B cell (primary cell): ENCODE measurements at regions of chr2 and their contacts with region 1.

Region 1: DNA sequence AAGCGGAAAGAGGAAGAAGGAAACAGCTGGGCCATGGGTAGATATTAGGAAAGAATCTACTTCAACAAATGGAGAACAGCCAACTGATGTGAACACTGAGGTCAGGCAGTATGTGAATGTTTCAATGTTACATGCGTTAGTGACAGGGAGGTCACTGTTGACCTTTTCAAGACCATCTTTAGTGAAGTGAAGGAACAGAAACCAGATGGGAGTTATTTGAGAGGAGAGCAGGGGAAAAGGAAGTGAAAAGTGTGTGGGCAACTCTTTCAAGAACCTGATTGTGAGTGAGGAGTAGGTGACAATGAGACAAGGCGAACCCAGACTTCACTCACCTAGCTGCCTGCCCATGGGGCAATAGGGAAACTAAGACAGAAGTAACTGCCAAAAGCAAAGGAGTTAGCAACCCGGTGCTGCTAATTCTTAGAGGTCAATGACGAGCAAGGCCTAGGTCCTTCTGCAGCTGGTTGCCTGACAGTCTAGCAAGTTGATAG is 67.0 kb downstream of the SP3 start:
- DNase-seq: peak; percentile 56
- ATAC-seq: peak; percentile 88
- H3K4me3 ChIP-seq: no peak overlapping the region
- H3K4me3 Mint-ChIP-seq: peak overlapping the region; percentile 35
- H3K27ac ChIP-seq: peak overlapping the region in 1 of 2 donors; percentile 39
- H3K27ac Mint-ChIP-seq: peak overlapping the region; percentile 54
- H3K4me1 ChIP-seq: peaks cover 15 to 23% of the 10 kb centered on the region in 2 donors
- H3K4me1 Mint-ChIP-seq: peaks cover 32% of the 10 kb centered on the region
- H3K27me3 ChIP-seq: no peaks in the 10 kb centered on the region
- H3K27me3 Mint-ChIP-seq: no peaks in the 10 kb centered on the region
- CTCF ChIP-seq: no peak

Region 2: GRCh38 chr2:173843526-173843925 is 54.7 kb before region 1 on chr2:
- CTCF ChIA-PET with region 1: no interaction called
- POLR2A ChIA-PET with region 1: no interaction called
- intact Hi-C with region 1: no loop called
- DNase-seq: no peak
- ATAC-seq: no peak
- H3K4me3 ChIP-seq: no peak overlapping the region
- H3K4me3 Mint-ChIP-seq: no peak overlapping the region
- H3K27ac ChIP-seq: no peak overlapping the region
- H3K27ac Mint-ChIP-seq: no peak overlapping the region
- H3K4me1 ChIP-seq: no peaks in the 10 kb centered on the region
- H3K4me1 Mint-ChIP-seq: no peaks in the 10 kb centered on the region
- H3K27me3 ChIP-seq: no peaks in the 10 kb centered on the region
- H3K27me3 Mint-ChIP-seq: peaks cover 30% of the 10 kb centered on the region
- CTCF ChIP-seq: no peak

Region 3: GRCh38 chr2:173854840-173855239 is 43.4 kb before region 1 on chr2:
- CTCF ChIA-PET with region 1: no interaction called
- POLR2A ChIA-PET with region 1: no interaction called
- intact Hi-C with region 1: no loop called
- DNase-seq: no peak
- ATAC-seq: no peak
- H3K4me3 ChIP-seq: no peak overlapping the region
- H3K4me3 Mint-ChIP-seq: no peak overlapping the region
- H3K27ac ChIP-seq: no peak overlapping the region
- H3K27ac Mint-ChIP-seq: no peak overlapping the region
- H3K4me1 ChIP-seq: peaks cover 0 to 5% of the 10 kb centered on the region in 2 donors
- H3K4me1 Mint-ChIP-seq: peaks cover 7% of the 10 kb centered on the region
- H3K27me3 ChIP-seq: no peaks in the 10 kb centered on the region
- H3K27me3 Mint-ChIP-seq: peaks cover 5% of the 10 kb centered on the region
- CTCF ChIP-seq: no peak

Region 4: GRCh38 chr2:173874894-173875237 is 23.4 kb before region 1 on chr2:
- CTCF ChIA-PET with region 1: no interaction called
- POLR2A ChIA-PET with region 1: no interaction called
- intact Hi-C with region 1: loop called (anchors 2 kb)
- DNase-seq: peak; percentile 85
- ATAC-seq: peak; percentile 99
- H3K4me3 ChIP-seq: peak overlapping the region in 1 of 5 experiments; percentile 3
- H3K4me3 Mint-ChIP-seq: peak overlapping the region; percentile 89
- H3K27ac ChIP-seq: no peak overlapping the region
- H3K27ac Mint-ChIP-seq: peak overlapping the region; percentile 50
- H3K4me1 ChIP-seq: peaks cover 29 to 32% of the 10 kb centered on the region in 2 donors
- H3K4me1 Mint-ChIP-seq: peaks cover 31% of the 10 kb centered on the region
- H3K27me3 ChIP-seq: peaks cover 0 to 5% (median 1%) of the 10 kb centered on the region in 4 experiments
- H3K27me3 Mint-ChIP-seq: peaks cover 23% of the 10 kb centered on the region
- CTCF ChIP-seq: no peak

Region 5: DNA sequence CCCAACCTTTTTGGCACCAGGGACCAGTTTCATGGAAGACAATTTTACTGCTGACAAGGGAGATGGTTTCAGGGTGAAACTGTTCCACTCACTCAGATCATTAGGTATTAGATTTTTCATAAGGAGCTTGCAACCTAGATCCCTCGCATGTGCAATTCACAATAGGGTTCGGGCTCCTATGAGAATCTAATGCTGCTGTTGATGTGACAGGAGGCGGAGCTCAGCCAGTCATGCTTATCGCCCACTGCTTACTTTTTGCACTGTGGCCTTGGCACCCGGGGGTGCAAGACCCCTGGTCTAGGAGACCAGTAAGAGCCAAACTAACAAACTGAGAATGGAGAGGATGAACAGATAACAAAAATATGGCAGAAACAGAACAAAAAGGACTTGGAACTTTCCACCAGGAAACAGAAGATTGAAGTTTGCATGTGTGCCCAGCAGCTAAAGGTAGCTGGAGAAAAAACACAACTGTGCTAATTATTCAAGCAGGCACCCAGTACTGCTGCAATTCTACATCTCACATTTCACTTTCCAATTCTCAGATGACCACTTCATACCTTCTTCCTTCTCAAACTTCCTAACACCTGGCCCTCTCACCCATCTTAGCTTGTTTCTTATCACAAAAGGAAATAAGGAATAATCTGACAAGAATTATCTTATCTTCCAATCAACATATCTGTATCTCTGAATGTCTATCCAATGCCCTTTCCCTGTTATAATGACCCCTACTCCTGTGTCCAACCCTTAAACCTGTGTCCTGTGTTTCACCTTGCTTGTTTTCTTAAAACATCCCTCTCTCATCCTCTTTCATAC is 42.2 kb after region 1 on chr2:
- CTCF ChIA-PET with region 1: no interaction called
- POLR2A ChIA-PET with region 1: interaction called, 14 read pairs
- intact Hi-C with region 1: loop called (anchors 5 kb)
- DNase-seq: no peak
- ATAC-seq: no peak
- H3K4me3 ChIP-seq: no peak overlapping the region
- H3K4me3 Mint-ChIP-seq: peak overlapping the region; percentile 72
- H3K27ac ChIP-seq: peak overlapping the region in 1 of 2 donors; percentile 49
- H3K27ac Mint-ChIP-seq: peak overlapping the region; percentile 70
- H3K4me1 ChIP-seq: peaks cover 45 to 71% of the 10 kb centered on the region in 2 donors
- H3K4me1 Mint-ChIP-seq: peaks cover 66% of the 10 kb centered on the region
- H3K27me3 ChIP-seq: no peaks in the 10 kb centered on the region
- H3K27me3 Mint-ChIP-seq: no peaks in the 10 kb centered on the region
- CTCF ChIP-seq: no peak